Common myeloid progenitor, CD34-positive (primary cell): ENCODE measurements at regions of chr12 and their contacts with region 1.

Region 1: GRCh38 chr12:52390739-52391617 is 5.5 kb upstream of the KRT84 start:
- DNase-seq: peak; percentile 14 to 35 (median 17)
- H3K4me3 ChIP-seq: no peak overlapping the region
- H3K27ac ChIP-seq: no peak overlapping the region
- H3K4me1 ChIP-seq: no peaks in the 10 kb centered on the region
- H3K27me3 ChIP-seq: peaks cover 0 to 13% (median 6%) of the 10 kb centered on the region in 5 experiments

Region 2: DNA sequence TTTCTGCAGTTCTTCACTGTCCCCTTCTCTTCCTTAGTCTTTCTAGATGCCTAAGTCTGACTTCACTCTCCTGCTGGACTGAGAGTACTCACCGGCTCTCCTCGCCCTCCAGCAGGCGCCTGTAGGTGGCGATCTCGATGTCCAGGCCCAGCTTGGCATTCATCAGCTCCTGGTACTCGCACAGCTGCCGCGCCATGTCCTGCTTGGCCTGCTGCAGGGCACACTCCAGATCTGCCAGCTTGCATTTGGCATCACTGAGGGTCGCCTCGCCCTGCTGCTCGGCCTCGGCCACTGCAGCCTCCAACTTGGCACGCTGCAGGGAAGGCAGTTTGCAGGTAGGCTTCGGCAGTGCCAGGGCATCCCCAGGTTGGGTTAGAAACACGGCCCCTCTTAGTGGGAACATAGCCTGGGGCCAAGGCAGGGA is 10.7 kb before region 1 on chr12:
- CTCF ChIA-PET with region 1: interaction called, 16 read pairs
- POLR2A ChIA-PET with region 1: no interaction called
- DNase-seq: peak in 2 of 3 donors; percentile 30 to 37
- H3K4me3 ChIP-seq: no peak overlapping the region
- H3K27ac ChIP-seq: no peak overlapping the region
- H3K4me1 ChIP-seq: no peaks in the 10 kb centered on the region
- H3K27me3 ChIP-seq: peaks cover 0 to 20% (median 0%) of the 10 kb centered on the region in 5 experiments

Region 3: DNA sequence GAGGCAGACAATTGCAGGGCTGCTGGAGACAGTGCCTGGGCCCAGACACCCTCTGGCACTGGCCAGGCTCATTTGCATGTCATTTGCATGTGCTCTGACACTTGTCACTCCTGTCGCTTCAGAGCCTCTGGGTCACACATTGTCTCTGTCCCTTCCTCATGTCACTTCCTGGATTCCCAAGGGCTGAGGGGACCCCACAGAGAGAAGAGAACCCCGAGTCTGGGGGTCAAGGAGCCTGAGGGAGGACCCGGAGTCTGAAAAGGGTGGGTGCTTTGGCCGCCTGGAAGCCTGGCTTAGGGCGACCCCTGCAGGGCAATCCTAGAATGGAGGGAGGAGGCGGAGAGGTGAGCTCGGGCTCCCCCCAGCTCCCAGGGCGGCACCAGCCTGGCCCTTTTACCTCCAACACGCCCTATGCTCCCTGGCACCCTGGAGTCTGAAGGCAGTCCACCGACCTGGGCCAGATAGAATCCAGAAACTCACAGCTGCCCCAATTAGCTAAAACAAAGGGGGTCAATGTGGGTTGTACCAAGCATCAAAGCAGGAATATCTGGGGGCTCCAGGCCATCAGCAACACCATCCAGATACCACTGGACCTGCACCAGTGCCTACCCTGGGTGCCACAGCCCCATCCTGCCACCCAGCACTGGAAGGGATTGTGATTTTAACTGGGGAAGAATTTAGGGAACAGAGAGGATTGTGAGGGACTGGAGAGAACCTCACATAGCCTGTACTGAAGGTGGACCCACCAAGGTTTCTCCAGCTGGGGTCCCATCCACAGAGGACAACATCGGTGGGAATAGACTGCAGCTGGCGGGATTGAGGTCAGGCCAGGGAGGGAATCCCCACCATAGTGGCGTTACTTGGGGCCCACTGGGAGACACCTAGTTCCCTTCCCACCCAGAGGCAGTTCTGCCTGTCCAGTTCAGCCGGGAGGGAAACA is 479.6 kb after region 1 on chr12:
- CTCF ChIA-PET with region 1: interaction called, 11 read pairs
- POLR2A ChIA-PET with region 1: interaction called, 4 read pairs
- DNase-seq: peak; percentile 61 to 72 (median 63)
- H3K4me3 ChIP-seq: no peak overlapping the region
- H3K27ac ChIP-seq: no peak overlapping the region
- H3K4me1 ChIP-seq: peaks cover 0 to 39% (median 30%) of the 10 kb centered on the region in 4 experiments
- H3K27me3 ChIP-seq: no peaks in the 10 kb centered on the region